HCT116 (cell line): ENCODE measurements at regions of chr12 and their contacts with region 1.

Region 1: DNA sequence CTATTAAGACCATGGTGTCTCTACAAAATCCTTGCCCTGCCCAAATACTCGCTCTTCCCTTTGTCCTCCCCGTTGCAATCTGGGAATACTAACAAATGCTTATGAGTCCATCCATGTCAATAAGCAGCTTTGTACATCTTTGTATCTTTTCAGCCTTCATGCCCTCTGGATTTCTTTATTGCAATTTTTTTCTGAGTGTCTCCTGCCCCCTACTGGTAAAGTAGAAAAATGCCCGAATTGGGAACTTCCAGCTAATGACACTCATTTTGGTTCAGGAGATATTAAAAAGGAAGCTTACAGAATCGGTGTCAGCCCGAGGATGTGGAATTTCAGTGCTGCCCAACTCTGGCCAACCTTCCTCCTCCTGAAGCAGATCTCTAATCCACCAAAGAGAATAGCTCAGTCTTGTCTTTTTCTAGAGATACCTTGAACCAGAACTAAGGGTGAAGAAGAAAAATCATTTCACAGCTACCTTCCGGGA is 46.0 kb downstream of the SH2B3 start:
- DNase-seq: peak; percentile 24
- ATAC-seq: peak; percentile 61
- H3K4me3 ChIP-seq: no peak overlapping the region
- H3K27ac ChIP-seq: no peak overlapping the region
- H3K4me1 ChIP-seq: no peaks in the 10 kb centered on the region
- H3K27me3 ChIP-seq: no peaks in the 10 kb centered on the region
- CTCF ChIP-seq: peak; percentile 75 to 92 (median 81)
- POLR2A ChIP-seq: no peak
- RAD21 ChIP-seq: peak; percentile 85

Region 2: DNA sequence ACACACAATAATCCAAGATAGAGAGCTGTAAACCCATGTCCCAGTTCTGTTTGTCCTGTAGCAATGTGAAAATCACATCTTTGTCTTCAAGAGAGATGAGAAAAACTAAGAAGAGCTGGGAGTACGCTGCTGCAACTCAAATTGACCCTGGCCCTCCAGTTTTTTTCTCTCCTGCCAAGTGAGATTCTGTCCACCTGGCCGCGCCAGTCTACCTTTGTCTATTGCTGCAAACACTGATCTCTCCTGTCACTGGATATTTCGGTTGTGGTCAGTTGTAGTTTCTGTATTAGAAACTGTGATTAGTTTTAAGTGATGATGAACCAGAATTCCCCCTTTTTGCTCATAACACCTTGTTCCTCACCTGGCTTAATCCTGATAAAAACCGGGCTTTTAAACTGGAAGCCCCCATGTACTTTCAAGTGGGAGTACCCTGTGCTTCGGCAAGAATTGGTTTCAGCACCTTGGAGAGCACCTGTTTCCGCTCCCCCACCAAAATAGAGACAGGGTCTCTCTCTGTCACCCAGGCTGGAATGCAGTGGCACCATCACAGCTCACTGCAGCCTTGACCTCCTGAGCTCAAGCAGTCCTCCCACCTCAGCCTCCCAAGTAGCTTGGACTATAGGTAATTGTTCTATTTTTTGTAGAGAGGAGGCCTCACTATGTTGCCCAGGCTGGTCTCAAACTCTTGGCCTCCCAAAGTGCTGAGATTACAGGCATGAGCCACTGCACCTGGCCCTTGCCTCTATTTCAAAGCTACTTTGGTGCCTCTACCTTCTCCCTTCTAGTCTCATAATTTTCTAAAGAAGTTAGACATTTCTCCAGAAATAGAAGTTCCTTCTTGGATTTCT is 239.6 kb before region 1 on chr12:
- CTCF ChIA-PET with region 1: no interaction called
- POLR2A ChIA-PET with region 1: no interaction called
- RAD21 ChIA-PET with region 1: no interaction called
- intact Hi-C with region 1: no loop called
- DNase-seq: no peak
- ATAC-seq: no peak
- H3K4me3 ChIP-seq: no peak overlapping the region
- H3K27ac ChIP-seq: no peak overlapping the region
- H3K4me1 ChIP-seq: no peaks in the 10 kb centered on the region
- H3K27me3 ChIP-seq: peaks cover 80% of the 10 kb centered on the region
- CTCF ChIP-seq: no peak
- POLR2A ChIP-seq: no peak
- RAD21 ChIP-seq: no peak

Region 3: GRCh38 chr12:111330800-111331752 is 120.6 kb before region 1 on chr12:
- CTCF ChIA-PET with region 1: interaction called, 25 read pairs
- POLR2A ChIA-PET with region 1: no interaction called
- RAD21 ChIA-PET with region 1: no interaction called
- intact Hi-C with region 1: loop called (anchors 2 kb)
- DNase-seq: peak; percentile 42
- ATAC-seq: peak; percentile 84
- H3K4me3 ChIP-seq: no peak overlapping the region
- H3K27ac ChIP-seq: no peak overlapping the region
- H3K4me1 ChIP-seq: peaks cover 0 to 12% of the 10 kb centered on the region in 2 experiments; a peak in 2 of 4 replicates
- H3K27me3 ChIP-seq: no peaks in the 10 kb centered on the region
- CTCF ChIP-seq: peak; percentile 52 to 77 (median 68)
- POLR2A ChIP-seq: no peak
- RAD21 ChIP-seq: peak; percentile 80

Region 4: GRCh38 chr12:111438481-111438880 is 13.2 kb before region 1 on chr12:
- CTCF ChIA-PET with region 1: interaction called, 10 read pairs
- POLR2A ChIA-PET with region 1: no interaction called
- RAD21 ChIA-PET with region 1: interaction called in 1 of 2 experiments, 3 read pairs
- intact Hi-C with region 1: no loop called
- DNase-seq: no peak
- ATAC-seq: no peak
- H3K4me3 ChIP-seq: no peak overlapping the region
- H3K27ac ChIP-seq: no peak overlapping the region
- H3K4me1 ChIP-seq: peaks cover 0 to 23% of the 10 kb centered on the region in 2 experiments; a peak in 1 of 4 replicates
- H3K27me3 ChIP-seq: no peaks in the 10 kb centered on the region
- CTCF ChIP-seq: no peak
- POLR2A ChIP-seq: no peak
- RAD21 ChIP-seq: no peak

Region 5: DNA sequence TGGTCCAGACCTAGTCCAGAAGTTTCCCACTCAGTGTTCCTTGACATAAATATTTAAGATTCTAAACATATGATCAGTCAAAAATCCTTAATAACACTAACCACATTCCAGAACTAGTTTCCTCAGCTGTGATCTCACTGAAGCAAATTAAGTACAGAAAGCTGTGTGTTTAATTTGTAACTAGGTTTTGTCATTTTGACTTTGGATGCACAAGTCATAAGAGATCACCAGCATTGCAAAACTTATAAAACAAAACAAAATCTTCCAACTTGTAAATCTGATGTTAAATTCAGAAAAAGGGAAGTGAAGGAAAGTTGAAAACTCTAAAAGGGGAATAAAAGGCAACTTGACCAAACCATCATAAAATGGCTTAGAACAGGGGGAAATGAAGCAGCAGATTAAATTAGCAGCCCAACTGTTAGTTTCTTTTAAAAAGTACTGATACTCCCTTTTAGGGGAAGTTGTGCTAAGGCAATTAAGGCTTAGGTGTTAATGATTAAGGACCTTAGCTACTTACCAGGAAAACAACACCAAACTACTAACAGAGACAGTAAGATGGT is 10.6 kb after region 1 on chr12:
- CTCF ChIA-PET with region 1: interaction called, 12 read pairs
- POLR2A ChIA-PET with region 1: interaction called, 3 read pairs
- RAD21 ChIA-PET with region 1: no interaction called
- intact Hi-C with region 1: no loop called
- DNase-seq: no peak
- ATAC-seq: no peak
- H3K4me3 ChIP-seq: no peak overlapping the region
- H3K27ac ChIP-seq: no peak overlapping the region
- H3K4me1 ChIP-seq: no peaks in the 10 kb centered on the region
- H3K27me3 ChIP-seq: no peaks in the 10 kb centered on the region
- CTCF ChIP-seq: no peak
- POLR2A ChIP-seq: no peak
- RAD21 ChIP-seq: no peak

Region 6: DNA sequence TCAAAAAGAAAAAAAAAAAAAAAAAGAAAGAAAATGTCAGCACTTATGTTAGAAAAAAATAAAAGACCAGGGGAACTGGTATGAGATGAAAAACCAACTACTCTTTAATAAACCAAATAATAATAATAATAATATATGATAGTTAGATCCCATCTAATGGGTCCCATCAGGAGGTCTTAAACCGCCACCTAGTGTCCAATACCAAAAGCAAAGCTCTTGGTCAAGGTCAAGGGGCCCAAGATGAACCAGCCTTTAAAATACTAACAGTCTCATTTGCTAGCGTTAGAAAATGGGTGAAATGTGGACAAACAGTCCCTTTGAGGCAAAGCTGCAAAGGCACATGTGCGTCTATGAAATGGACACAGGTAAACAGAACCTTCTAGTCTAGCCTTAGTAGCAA is 221.8 kb after region 1 on chr12:
- CTCF ChIA-PET with region 1: interaction called, 14 read pairs
- POLR2A ChIA-PET with region 1: no interaction called
- RAD21 ChIA-PET with region 1: no interaction called
- intact Hi-C with region 1: no loop called
- DNase-seq: peak; percentile 33
- ATAC-seq: peak; percentile 67
- H3K4me3 ChIP-seq: no peak overlapping the region
- H3K27ac ChIP-seq: no peak overlapping the region
- H3K4me1 ChIP-seq: no peaks in the 10 kb centered on the region
- H3K27me3 ChIP-seq: no peaks in the 10 kb centered on the region
- CTCF ChIP-seq: peak; percentile 53 to 66 (median 56); a peak in 5 of 6 replicates
- POLR2A ChIP-seq: no peak
- RAD21 ChIP-seq: peak; percentile 76